Activated CD4-positive, alpha-beta memory T cell treated with anti-CD3 and anti-CD28 coated beads, Interleukin-2, amount 10 ng/mL, durations not matched to agents 7 days and 5 days (primary cell): ENCODE measurements at regions of chr9 and their contacts with region 1.

Region 1: GRCh38 chr9:33415501-33416038 is 13.2 kb upstream of the AQP7 start:
- DNase-seq: peak; percentile 96
- H3K4me3 Mint-ChIP-seq: peak overlapping the region; percentile 49
- H3K27ac Mint-ChIP-seq: peak overlapping the region; percentile 95
- H3K4me1 Mint-ChIP-seq: peaks cover 60% of the 10 kb centered on the region
- H3K27me3 Mint-ChIP-seq: no peaks in the 10 kb centered on the region

Region 2: DNA sequence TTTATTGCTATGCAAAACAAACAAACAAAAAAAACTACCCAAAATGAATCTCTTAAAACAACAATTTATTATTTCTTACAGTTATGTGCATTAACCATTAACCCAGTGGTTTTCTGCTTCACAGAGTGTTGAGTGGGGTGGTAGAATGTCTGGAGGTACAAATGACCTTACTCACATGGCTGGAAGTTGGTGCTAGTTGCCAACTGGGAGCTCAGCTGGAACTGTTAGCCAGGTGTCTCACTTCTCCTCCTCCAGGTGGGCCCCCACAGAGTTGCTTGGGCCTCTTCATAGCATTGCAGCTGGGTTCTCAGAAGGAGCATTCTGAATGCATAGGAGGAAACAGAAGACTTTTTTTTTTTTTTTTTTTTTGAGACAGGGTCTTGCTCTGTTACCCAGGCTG is 237.9 kb before region 1 on chr9:
- CTCF ChIA-PET with region 1: no interaction called
- POLR2A ChIA-PET with region 1: no interaction called
- DNase-seq: no peak
- H3K4me3 Mint-ChIP-seq: no peak overlapping the region
- H3K27ac Mint-ChIP-seq: no peak overlapping the region
- H3K4me1 Mint-ChIP-seq: no peaks in the 10 kb centered on the region
- H3K27me3 Mint-ChIP-seq: peaks cover 16% of the 10 kb centered on the region

Region 3: DNA sequence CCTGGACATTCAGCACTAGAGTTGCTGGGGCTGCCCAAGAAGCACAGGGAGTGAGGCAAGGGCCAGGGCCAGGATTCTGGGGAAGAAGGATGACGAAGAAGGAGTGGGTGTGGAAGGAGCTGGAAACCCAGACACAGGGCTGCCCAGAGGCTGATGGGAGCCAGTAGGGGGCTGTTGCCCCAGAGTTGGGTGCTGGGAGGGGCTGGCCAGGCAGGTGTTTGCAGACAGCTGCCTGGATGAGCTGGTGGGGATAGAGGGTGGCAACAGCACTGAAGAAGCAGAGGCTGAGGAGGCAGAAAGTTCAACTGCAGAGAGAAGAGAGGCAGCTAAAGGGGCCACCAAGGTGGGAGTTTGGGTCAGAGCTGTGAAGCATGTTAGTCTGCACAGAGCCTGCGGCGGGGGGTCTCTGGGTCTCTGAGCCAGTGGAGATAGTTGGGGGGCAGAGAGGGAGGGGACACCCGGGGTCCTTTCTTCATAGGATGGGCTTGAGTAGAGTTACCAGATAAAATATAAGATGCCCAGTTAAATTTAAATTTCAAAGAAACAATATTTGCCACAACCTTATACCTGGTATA is 10.7 kb before region 1 on chr9:
- CTCF ChIA-PET with region 1: interaction called, 43 read pairs
- POLR2A ChIA-PET with region 1: interaction called, 6 read pairs
- DNase-seq: no peak
- H3K4me3 Mint-ChIP-seq: no peak overlapping the region
- H3K27ac Mint-ChIP-seq: no peak overlapping the region
- H3K4me1 Mint-ChIP-seq: peaks cover 10% of the 10 kb centered on the region
- H3K27me3 Mint-ChIP-seq: no peaks in the 10 kb centered on the region

Region 4: GRCh38 chr9:33436440-33436839 is 20.9 kb after region 1 on chr9:
- CTCF ChIA-PET with region 1: interaction called, 19 read pairs
- POLR2A ChIA-PET with region 1: interaction called, 26 read pairs
- DNase-seq: no peak
- H3K4me3 Mint-ChIP-seq: no peak overlapping the region
- H3K27ac Mint-ChIP-seq: no peak overlapping the region
- H3K4me1 Mint-ChIP-seq: peaks cover 55% of the 10 kb centered on the region
- H3K27me3 Mint-ChIP-seq: no peaks in the 10 kb centered on the region

Region 5: GRCh38 chr9:33452828-33453271 is 37.3 kb after region 1 on chr9:
- CTCF ChIA-PET with region 1: interaction called, 278 read pairs
- POLR2A ChIA-PET with region 1: interaction called, 75 read pairs
- DNase-seq: peak; percentile 64
- H3K4me3 Mint-ChIP-seq: peak overlapping the region; percentile 2
- H3K27ac Mint-ChIP-seq: peak overlapping the region; percentile 82
- H3K4me1 Mint-ChIP-seq: peaks cover 63% of the 10 kb centered on the region
- H3K27me3 Mint-ChIP-seq: no peaks in the 10 kb centered on the region

Region 6: GRCh38 chr9:33466565-33467495 is 51.3 kb after region 1 on chr9:
- CTCF ChIA-PET with region 1: interaction called, 73 read pairs
- POLR2A ChIA-PET with region 1: interaction called, 31 read pairs
- DNase-seq: peak; percentile 79
- H3K4me3 Mint-ChIP-seq: no peak overlapping the region
- H3K27ac Mint-ChIP-seq: no peak overlapping the region
- H3K4me1 Mint-ChIP-seq: peaks cover 9% of the 10 kb centered on the region
- H3K27me3 Mint-ChIP-seq: no peaks in the 10 kb centered on the region